GM12878 (cell line): ENCODE measurements at regions of chr4 and their contacts with region 1.

Region 1: DNA sequence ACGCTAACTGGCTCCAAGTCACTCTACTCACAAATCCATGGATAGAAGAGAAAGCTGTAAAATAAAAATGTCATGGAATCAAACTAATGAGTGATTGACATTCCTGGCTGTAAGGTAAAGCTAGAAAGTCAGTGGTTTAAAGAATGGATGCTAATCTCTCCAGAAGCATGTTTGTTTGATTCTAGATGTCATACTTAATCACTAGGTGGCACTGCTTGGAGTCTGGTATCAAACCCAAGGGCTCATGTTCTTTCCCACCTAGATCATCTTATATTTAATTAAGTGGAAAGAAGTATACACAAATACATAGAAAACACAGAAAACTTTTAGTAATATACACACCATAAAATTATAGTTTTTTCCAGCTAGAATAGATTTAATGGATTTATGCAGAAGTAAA is 2666.6 kb downstream of the PCDH7 start:
- DNase-seq: no peak
- ATAC-seq: peak; percentile 50; the same call in 2 of the 3 replicates
- H3K4me3 ChIP-seq: no peak overlapping the region
- H3K27ac ChIP-seq: no peak overlapping the region
- H3K4me1 ChIP-seq: no peaks in the 10 kb centered on the region
- H3K27me3 ChIP-seq: no peaks in the 10 kb centered on the region
- CTCF ChIP-seq: peak in 1 of 3 experiments; percentile 21; a peak in 1 of 6 replicates
- EP300 ChIP-seq: no peak
- POLR2A ChIP-seq: no peak
- RAD21 ChIP-seq: no peak

Region 2: GRCh38 chr4:33369446-33369845 is 17.3 kb before region 1 on chr4:
- CTCF ChIA-PET with region 1: interaction called, 15 read pairs
- POLR2A ChIA-PET with region 1: no interaction called
- RAD21 ChIA-PET with region 1: no interaction called
- SMC1A ChIA-PET with region 1: no interaction called
- in situ Hi-C with region 1: no loop called
- intact Hi-C with region 1: no loop called
- DNase-seq: no peak
- ATAC-seq: no peak
- H3K4me3 ChIP-seq: no peak overlapping the region
- H3K27ac ChIP-seq: no peak overlapping the region
- H3K4me1 ChIP-seq: no peaks in the 10 kb centered on the region
- H3K27me3 ChIP-seq: no peaks in the 10 kb centered on the region
- CTCF ChIP-seq: no peak
- EP300 ChIP-seq: no peak
- POLR2A ChIP-seq: no peak
- RAD21 ChIP-seq: no peak

Region 3: DNA sequence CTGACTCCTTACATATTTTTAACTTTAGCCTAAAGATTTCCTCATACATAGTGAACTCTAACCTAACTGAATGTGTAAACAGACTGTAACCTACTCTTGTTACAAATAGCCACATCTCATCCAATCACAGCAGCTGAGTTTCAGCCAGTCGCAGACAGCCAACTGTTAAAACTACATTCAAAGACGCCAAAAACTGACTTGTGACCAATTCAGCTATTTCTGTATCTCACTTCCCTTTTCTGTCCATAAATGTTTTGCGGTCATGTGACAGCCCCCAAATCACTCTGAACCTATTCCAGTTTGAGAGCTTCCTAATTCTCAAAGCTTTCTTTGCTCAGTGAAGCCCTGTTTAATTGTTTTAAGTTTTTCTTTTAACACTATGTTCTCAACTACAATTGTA is 125.6 kb after region 1 on chr4:
- CTCF ChIA-PET with region 1: no interaction called
- POLR2A ChIA-PET with region 1: no interaction called
- RAD21 ChIA-PET with region 1: no interaction called
- SMC1A ChIA-PET with region 1: no interaction called
- in situ Hi-C with region 1: no loop called
- intact Hi-C with region 1: no loop called
- DNase-seq: peak; percentile 19
- ATAC-seq: peak; percentile 94
- H3K4me3 ChIP-seq: no peak overlapping the region
- H3K27ac ChIP-seq: no peak overlapping the region
- H3K4me1 ChIP-seq: no peaks in the 10 kb centered on the region
- H3K27me3 ChIP-seq: no peaks in the 10 kb centered on the region
- CTCF ChIP-seq: no peak
- EP300 ChIP-seq: 0 out of 4 replicates have a peak, but pooled peaks of 1 of the 2 experiments have one; percentile 28
- POLR2A ChIP-seq: no peak
- RAD21 ChIP-seq: no peak

Region 4: DNA sequence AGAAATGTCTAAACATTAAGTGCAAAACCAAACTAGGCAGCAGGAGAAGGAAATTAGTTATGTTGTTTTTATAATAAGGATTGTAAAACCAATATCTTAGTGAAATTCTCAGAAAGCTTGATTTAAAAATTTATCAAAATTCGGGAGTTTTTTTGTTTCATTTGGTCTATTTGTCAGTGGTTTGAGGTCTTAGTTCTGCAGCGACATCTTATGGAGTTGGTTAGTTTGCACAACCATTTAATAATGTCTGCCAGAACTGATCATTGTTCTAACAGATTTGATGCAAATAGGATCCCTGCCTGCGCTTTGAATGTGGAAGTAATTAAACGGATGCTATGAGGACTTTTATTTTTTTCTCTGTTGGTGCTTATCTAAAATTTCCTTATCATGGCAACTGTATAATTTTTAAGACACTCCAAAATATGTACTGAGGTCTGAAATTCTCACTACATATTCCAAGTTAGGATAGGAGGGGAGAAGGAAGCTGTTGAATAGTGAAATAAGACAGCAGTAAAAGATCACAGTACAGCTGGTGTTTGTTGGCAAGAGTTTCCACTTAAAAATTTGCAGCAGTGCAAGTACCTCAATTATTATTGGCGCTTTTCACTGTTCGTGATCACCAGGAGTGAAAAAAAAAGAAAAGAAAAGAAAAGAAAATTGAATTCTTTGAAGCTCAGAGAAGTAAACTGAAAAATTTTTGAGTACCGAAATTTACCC is 336.2 kb after region 1 on chr4:
- CTCF ChIA-PET with region 1: interaction called, 33 read pairs
- POLR2A ChIA-PET with region 1: no interaction called
- RAD21 ChIA-PET with region 1: interaction called, 6 read pairs
- SMC1A ChIA-PET with region 1: interaction called, 16 read pairs
- in situ Hi-C with region 1: no loop called
- intact Hi-C with region 1: no loop called
- DNase-seq: no peak
- ATAC-seq: no peak
- H3K4me3 ChIP-seq: no peak overlapping the region
- H3K27ac ChIP-seq: no peak overlapping the region
- H3K4me1 ChIP-seq: no peaks in the 10 kb centered on the region
- H3K27me3 ChIP-seq: no peaks in the 10 kb centered on the region
- CTCF ChIP-seq: peak in 1 of 3 experiments; percentile 25; a peak in 2 of 6 replicates
- EP300 ChIP-seq: no peak
- POLR2A ChIP-seq: no peak
- RAD21 ChIP-seq: no peak

Region 5: GRCh38 chr4:33954759-33955158 is 568.0 kb after region 1 on chr4:
- CTCF ChIA-PET with region 1: no interaction called
- POLR2A ChIA-PET with region 1: no interaction called
- RAD21 ChIA-PET with region 1: no interaction called
- SMC1A ChIA-PET with region 1: no interaction called
- in situ Hi-C with region 1: no loop called
- intact Hi-C with region 1: no loop called
- DNase-seq: no peak
- ATAC-seq: no peak
- H3K4me3 ChIP-seq: no peak overlapping the region
- H3K27ac ChIP-seq: no peak overlapping the region
- H3K4me1 ChIP-seq: no peaks in the 10 kb centered on the region
- H3K27me3 ChIP-seq: no peaks in the 10 kb centered on the region
- CTCF ChIP-seq: no peak
- EP300 ChIP-seq: no peak
- POLR2A ChIP-seq: no peak
- RAD21 ChIP-seq: no peak